K562 (cell line): ENCODE measurements at regions of chr17 and their contacts with region 1.

Region 1: GRCh38 chr17:57987580-57988421 is at the start of gene VEZF1:
- DNase-seq: peak; percentile 84 to 95 (median 90)
- ATAC-seq: peak; percentile 77
- H3K4me3 ChIP-seq: peak within 1 kb of the TSS; percentile 75
- H3K27ac ChIP-seq: peak within 1 kb of the TSS; percentile 78
- H3K4me1 ChIP-seq: peaks cover 12 to 37% of the 10 kb centered on the region in 2 experiments; a peak in 3 of 5 replicates
- H3K27me3 ChIP-seq: no peaks in the 10 kb centered on the region
- CTCF ChIP-seq: no peak
- EP300 ChIP-seq: no peak
- POLR2A ChIP-seq: no peak; the same call in 1 of the 2 replicates
- RAD21 ChIP-seq: no peak; a peak in 1 of 4 replicates
- polyA plus RNA-seq, gene VEZF1: 9.5 to 9.8 TPM

Region 2: DNA sequence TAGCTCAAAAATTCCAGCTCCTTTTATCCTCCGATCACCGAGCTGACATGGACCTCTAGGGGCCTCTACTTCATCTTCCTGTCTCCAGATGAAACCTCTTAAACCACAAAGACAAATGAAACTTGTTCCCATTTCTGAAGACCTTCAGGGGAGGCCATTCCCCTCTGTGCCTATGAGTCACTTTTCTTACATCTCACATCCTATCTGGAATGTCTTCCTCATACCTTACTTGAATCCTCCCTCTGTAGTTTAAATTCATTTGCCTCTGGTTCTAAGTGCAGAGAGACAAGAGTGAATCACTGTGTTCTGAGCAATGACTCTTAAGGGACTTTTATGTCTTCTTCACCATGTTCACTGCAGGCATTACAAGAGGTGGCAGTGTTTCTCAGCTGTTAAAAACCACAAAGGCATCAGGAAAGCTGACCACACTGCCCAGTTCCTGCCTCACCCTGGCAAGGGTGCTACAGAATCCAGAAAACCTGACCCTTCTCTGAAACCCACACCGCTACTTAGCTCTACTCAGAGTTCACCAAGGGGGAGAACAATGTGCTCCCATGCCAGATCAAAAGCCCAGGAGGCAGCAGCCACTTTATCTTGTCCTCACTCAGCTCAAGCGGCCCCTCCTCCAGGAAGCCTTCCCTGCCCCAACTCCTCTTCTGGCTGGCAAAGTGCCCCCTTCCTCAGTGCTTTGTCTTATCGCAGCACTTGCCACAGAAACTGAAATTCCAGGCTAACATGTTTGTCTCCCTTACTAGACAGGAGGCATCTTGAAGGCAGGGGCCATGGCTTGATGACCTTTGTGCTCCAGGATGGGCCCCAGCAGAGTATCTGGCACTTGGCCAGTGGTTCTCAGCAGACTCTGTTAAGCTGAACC is 39.0 kb before region 1 on chr17:
- CTCF ChIA-PET with region 1: no interaction called
- POLR2A ChIA-PET with region 1: interaction called, 4 read pairs
- in situ Hi-C with region 1: no loop called
- intact Hi-C with region 1: loop called (anchors 2 kb)
- DNase-seq: peak in 1 of 4 experiments; percentile 37
- ATAC-seq: no peak
- H3K4me3 ChIP-seq: no peak overlapping the region
- H3K27ac ChIP-seq: no peak overlapping the region
- H3K4me1 ChIP-seq: peaks cover 12 to 35% of the 10 kb centered on the region in 2 experiments; a peak in 4 of 5 replicates
- H3K27me3 ChIP-seq: no peaks in the 10 kb centered on the region
- CTCF ChIP-seq: no peak
- EP300 ChIP-seq: no peak
- POLR2A ChIP-seq: no peak
- RAD21 ChIP-seq: no peak